ENCODE measurements at regions of chr17 and their contacts with region 1.

Region 1: GRCh38 chr17:34637548-34638525 is 58.5 kb downstream of the TMEM132E start:
- DNase-seq: peak; percentile 63 to 86 (median 80)
- ATAC-seq: peak; percentile 96
- H3K4me3 ChIP-seq: peak overlapping the region; percentile 68
- H3K4me3 Mint-ChIP-seq: peak overlapping the region; percentile 30 to 93 (median 89)
- H3K27ac ChIP-seq: peak overlapping the region; percentile 17
- H3K27ac Mint-ChIP-seq: peak overlapping the region in 6 of 9 donors; percentile 25 to 76 (median 56)
- H3K4me1 ChIP-seq: peaks cover 4 to 12% of the 10 kb centered on the region in 2 donors
- H3K4me1 Mint-ChIP-seq: peaks cover 0 to 19% (median 6%) of the 10 kb centered on the region in 7 donors
- H3K27me3 ChIP-seq: no peaks in the 10 kb centered on the region
- H3K27me3 Mint-ChIP-seq: peaks cover 0 to 35% (median 3%) of the 10 kb centered on the region in 5 donors

Region 2: DNA sequence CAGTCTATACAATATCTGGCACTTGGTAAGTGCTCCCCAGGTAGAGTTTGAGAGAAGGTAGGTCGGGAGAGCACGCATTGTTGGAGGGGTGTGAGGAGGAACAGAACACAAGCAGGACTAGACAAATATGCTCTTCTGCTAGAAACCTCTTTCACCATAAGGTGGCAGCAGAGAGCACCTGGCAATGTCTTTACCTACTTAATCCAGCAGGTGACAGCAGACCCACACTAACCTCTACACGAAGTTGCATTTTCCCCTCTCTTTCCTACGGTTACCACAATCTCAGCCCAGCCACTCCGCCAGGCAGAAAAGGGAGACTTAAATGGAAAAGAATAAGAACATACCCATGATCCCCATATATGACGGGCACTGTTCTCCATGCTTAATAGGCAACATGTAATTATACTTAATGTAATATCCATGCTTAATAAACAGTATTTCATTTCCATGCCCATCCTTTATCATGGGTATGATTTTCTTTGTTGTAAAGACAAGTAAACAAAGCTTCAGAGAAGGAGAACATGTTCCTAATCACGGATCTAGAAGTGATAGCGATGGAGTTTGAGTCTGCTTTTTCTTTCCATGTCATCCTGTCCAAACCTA is 437.8 kb before region 1 on chr17:
- CTCF ChIA-PET with region 1: no interaction called
- POLR2A ChIA-PET with region 1: no interaction called
- intact Hi-C with region 1: loop called in 1 of 2 experiments (anchors 2 kb)
- DNase-seq: peak; percentile 23 to 76 (median 62)
- ATAC-seq: peak; percentile 93
- H3K4me3 ChIP-seq: no peak overlapping the region
- H3K4me3 Mint-ChIP-seq: no peak overlapping the region
- H3K27ac ChIP-seq: no peak overlapping the region
- H3K27ac Mint-ChIP-seq: no peak overlapping the region
- H3K4me1 ChIP-seq: no peaks in the 10 kb centered on the region
- H3K4me1 Mint-ChIP-seq: peaks cover 0 to 15% (median 0%) of the 10 kb centered on the region in 7 donors
- H3K27me3 ChIP-seq: no peaks in the 10 kb centered on the region
- H3K27me3 Mint-ChIP-seq: peaks cover 18 to 38% (median 24%) of the 10 kb centered on the region in 5 donors

Region 3: DNA sequence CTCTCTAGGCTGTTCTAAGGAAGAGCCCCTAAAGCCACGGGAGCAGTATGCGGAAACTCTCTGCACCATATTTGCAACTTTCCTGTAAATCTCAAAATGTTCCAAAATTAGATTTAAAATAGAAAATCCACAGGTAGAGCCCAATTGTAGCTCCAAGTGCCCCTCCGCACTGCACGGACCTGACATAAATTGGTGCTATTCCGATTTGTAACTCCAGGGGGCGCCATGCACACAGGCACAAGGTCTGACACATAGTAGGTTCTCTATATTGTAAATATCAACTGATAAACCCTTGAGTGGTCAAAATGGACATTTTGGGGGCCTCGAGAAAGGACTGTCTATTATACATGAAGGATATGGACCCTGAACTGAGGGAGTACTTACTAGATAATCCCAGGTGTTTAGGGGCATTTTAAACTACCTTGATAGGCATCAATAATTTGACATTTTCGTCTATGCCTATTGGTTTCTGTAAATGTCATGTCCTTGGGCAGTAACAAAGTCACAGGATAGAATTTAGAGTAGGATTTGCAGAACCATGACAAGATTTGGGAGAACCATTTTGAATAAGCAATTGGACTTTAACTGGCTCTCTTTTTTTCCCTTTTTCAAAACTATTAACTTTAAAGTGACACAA is 95.0 kb before region 1 on chr17:
- CTCF ChIA-PET with region 1: interaction called, 9 read pairs
- POLR2A ChIA-PET with region 1: no interaction called
- intact Hi-C with region 1: loop called (anchors 1 kb)
- DNase-seq: peak; percentile 18 to 58 (median 35)
- ATAC-seq: peak; percentile 62
- H3K4me3 ChIP-seq: no peak overlapping the region
- H3K4me3 Mint-ChIP-seq: no peak overlapping the region
- H3K27ac ChIP-seq: no peak overlapping the region
- H3K27ac Mint-ChIP-seq: no peak overlapping the region
- H3K4me1 ChIP-seq: no peaks in the 10 kb centered on the region
- H3K4me1 Mint-ChIP-seq: no peaks in the 10 kb centered on the region
- H3K27me3 ChIP-seq: no peaks in the 10 kb centered on the region
- H3K27me3 Mint-ChIP-seq: peaks cover 21 to 34% (median 30%) of the 10 kb centered on the region in 5 donors

Region 4: GRCh38 chr17:34584805-34585416 is 52.9 kb before region 1 on chr17:
- CTCF ChIA-PET with region 1: interaction called, 6 read pairs
- POLR2A ChIA-PET with region 1: no interaction called
- intact Hi-C with region 1: loop called in 1 of 2 experiments (anchors 1 kb)
- DNase-seq: peak in 4 of 9 donors; percentile 21 to 35 (median 32)
- ATAC-seq: peak; percentile 51
- H3K4me3 ChIP-seq: no peak overlapping the region
- H3K4me3 Mint-ChIP-seq: no peak overlapping the region
- H3K27ac ChIP-seq: no peak overlapping the region
- H3K27ac Mint-ChIP-seq: no peak overlapping the region
- H3K4me1 ChIP-seq: peaks cover 0 to 6% of the 10 kb centered on the region in 2 donors
- H3K4me1 Mint-ChIP-seq: peaks cover 0 to 15% (median 4%) of the 10 kb centered on the region in 7 donors
- H3K27me3 ChIP-seq: peaks cover 0 to 7% of the 10 kb centered on the region in 2 donors
- H3K27me3 Mint-ChIP-seq: peaks cover 41 to 78% (median 52%) of the 10 kb centered on the region in 5 donors

Region 5: GRCh38 chr17:34892461-34893249 is 254.8 kb after region 1 on chr17:
- CTCF ChIA-PET with region 1: no interaction called
- POLR2A ChIA-PET with region 1: no interaction called
- intact Hi-C with region 1: loop called in 1 of 2 experiments (anchors 2 kb)
- DNase-seq: peak in 6 of 9 donors; percentile 10 to 38 (median 30)
- ATAC-seq: no peak
- H3K4me3 ChIP-seq: no peak overlapping the region
- H3K4me3 Mint-ChIP-seq: no peak overlapping the region
- H3K27ac ChIP-seq: no peak overlapping the region
- H3K27ac Mint-ChIP-seq: no peak overlapping the region
- H3K4me1 ChIP-seq: no peaks in the 10 kb centered on the region
- H3K4me1 Mint-ChIP-seq: peaks cover 0 to 2% (median 0%) of the 10 kb centered on the region in 7 donors
- H3K27me3 ChIP-seq: no peaks in the 10 kb centered on the region
- H3K27me3 Mint-ChIP-seq: peaks cover 20 to 53% (median 24%) of the 10 kb centered on the region in 5 donors